Activated CD4-positive, alpha-beta T cell treated with anti-CD3 and anti-CD28 coated beads for 36 hours (primary cell): ENCODE measurements at regions of chr6 and their contacts with region 1.

Region 1: DNA sequence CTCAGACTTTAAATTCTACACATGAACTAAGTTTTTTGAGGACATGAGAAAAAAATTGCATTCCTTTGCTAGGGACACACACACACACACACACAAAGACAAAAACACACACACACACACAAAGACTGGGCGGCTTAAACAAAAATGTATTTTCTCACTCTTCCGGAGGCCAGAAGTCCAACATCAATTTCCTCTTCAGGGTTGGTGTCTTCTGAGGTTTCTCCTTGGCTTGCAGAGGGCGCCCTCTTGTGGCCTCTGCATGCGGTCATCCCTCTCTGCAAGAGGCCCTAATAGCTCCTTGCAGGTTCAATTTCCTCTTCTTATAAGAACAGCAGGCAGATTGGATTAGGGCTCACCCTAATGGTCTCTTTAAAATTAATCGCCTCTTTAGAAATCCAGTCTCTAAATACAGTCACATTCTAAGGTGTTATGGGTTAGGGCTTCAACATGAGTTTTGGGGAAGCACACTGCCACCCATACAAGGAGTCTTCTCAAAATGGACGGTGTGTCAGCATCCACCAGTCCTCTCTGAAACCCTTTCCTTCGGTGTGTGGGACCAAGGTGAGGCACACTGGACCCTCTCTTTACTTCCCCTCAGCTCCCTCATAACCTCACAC is 61.4 kb downstream of the GPR6 start:
- DNase-seq: peak; percentile 92
- ATAC-seq: peak; percentile 87
- H3K4me3 Mint-ChIP-seq: peak overlapping the region; percentile 79
- H3K27ac Mint-ChIP-seq: peak overlapping the region; percentile 98
- H3K4me1 Mint-ChIP-seq: peaks cover 13% of the 10 kb centered on the region
- H3K27me3 Mint-ChIP-seq: no peaks in the 10 kb centered on the region

Region 2: DNA sequence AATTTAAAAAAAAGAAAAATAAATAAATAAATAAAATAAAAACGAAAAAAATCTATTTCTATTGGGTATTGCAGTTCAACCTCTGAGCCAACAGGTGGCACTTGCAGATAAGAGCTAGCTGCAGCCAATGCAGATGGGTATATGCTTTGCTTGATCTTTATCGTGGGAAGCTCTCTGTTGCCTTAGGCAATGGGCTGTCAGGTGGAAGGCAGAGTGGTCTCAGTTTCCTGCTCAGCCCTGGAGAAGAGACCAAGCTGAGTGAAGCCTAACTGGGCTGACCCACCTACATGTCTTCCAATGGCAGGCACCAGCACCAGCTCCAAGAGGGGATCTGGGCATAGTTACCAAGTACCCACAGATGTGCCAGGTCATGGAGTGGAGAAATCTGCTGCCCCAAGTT is 443.5 kb before region 1 on chr6:
- CTCF ChIA-PET with region 1: interaction called, 17 read pairs
- POLR2A ChIA-PET with region 1: no interaction called
- intact Hi-C with region 1: loop called (anchors 1 to 5 kb)
- DNase-seq: peak; percentile 44
- ATAC-seq: peak; percentile 75
- H3K4me3 Mint-ChIP-seq: no peak overlapping the region
- H3K27ac Mint-ChIP-seq: no peak overlapping the region
- H3K4me1 Mint-ChIP-seq: peaks cover 8% of the 10 kb centered on the region
- H3K27me3 Mint-ChIP-seq: no peaks in the 10 kb centered on the region

Region 3: GRCh38 chr6:109705258-109705657 is 334.2 kb before region 1 on chr6:
- CTCF ChIA-PET with region 1: interaction called, 135 read pairs
- POLR2A ChIA-PET with region 1: no interaction called
- intact Hi-C with region 1: loop called (anchors 1 kb)
- DNase-seq: peak; percentile 88
- ATAC-seq: peak; percentile 99
- H3K4me3 Mint-ChIP-seq: no peak overlapping the region
- H3K27ac Mint-ChIP-seq: no peak overlapping the region
- H3K4me1 Mint-ChIP-seq: peaks cover 12% of the 10 kb centered on the region
- H3K27me3 Mint-ChIP-seq: no peaks in the 10 kb centered on the region

Region 4: DNA sequence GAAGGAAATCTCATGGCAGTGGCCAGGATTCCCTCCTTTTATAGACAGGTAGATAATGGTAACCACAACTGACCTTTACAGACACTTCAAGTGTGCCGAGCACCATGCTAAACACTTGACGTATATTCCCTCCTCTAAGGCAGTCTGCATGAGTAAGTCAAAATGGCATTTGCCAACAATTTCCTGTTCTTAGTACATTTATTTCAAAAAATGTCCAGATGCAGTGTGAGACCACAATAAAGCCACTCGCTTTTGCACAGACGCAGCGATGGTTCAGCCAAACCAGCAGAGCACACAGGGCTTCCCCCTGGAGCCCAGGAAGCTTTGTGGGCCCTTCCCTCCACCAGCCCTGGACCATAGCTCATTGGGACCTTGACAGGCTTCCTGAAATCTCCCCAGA is 77.8 kb before region 1 on chr6:
- CTCF ChIA-PET with region 1: no interaction called
- POLR2A ChIA-PET with region 1: interaction called, 3 read pairs
- intact Hi-C with region 1: loop called in 1 of 2 experiments (anchors 5 kb)
- DNase-seq: no peak
- ATAC-seq: peak; percentile 64
- H3K4me3 Mint-ChIP-seq: no peak overlapping the region
- H3K27ac Mint-ChIP-seq: no peak overlapping the region
- H3K4me1 Mint-ChIP-seq: no peaks in the 10 kb centered on the region
- H3K27me3 Mint-ChIP-seq: peaks cover 6% of the 10 kb centered on the region

Region 5: GRCh38 chr6:110053395-110054240 is 14.1 kb after region 1 on chr6:
- CTCF ChIA-PET with region 1: interaction called, 23 read pairs
- POLR2A ChIA-PET with region 1: no interaction called
- intact Hi-C with region 1: no loop called
- DNase-seq: no peak
- ATAC-seq: peak; percentile 42
- H3K4me3 Mint-ChIP-seq: no peak overlapping the region
- H3K27ac Mint-ChIP-seq: no peak overlapping the region
- H3K4me1 Mint-ChIP-seq: no peaks in the 10 kb centered on the region
- H3K27me3 Mint-ChIP-seq: no peaks in the 10 kb centered on the region